Calu3 (cell line): ENCODE measurements at regions of chrX and their contacts with region 1.

Region 1: DNA sequence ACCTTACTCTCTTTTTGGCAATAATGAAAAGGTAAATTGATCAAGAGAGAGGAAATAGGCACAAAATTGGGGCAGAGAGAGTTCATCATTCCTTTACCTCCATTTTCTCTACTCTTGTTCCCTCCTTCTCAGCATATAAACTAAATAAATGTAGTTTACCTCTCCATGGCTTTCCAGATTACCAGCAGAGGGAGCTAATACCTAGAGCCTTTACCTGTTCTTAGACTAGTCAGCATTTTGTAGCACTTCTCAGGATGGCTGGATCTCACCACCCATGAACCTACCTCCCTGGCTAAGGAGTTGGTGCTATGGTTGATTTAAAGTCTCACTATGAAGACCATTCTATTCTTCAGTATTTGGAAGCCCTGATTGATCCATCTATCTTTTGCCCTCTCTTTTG is 15.7 kb downstream of the OFD1 start:
- DNase-seq: peak; percentile 19
- H3K4me3 Mint-ChIP-seq: no peak overlapping the region
- H3K27ac Mint-ChIP-seq: no peak overlapping the region
- H3K4me1 Mint-ChIP-seq: peaks cover 14% of the 10 kb centered on the region
- H3K27me3 Mint-ChIP-seq: no peaks in the 10 kb centered on the region
- CTCF ChIP-seq: no peak

Region 2: DNA sequence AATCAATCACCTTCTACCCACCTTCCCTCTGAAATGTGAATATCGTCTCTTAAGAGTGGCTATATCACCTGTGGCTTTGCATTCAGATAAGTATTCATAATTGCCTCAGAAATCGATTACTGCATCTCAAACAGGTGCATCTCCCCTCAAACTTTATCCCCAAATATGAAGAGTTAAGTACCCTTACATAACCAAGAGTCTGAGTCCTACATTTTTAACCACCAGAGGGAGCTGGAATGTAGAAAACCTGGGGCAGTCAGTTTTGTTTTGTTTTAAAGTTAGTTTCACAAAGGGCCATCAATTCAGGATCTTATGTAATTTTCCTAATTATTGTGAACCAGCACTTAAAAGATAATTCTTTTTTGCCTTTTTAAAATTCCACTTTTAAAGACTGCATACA is 91.6 kb before region 1 on chrX:
- CTCF ChIA-PET with region 1: no interaction called
- intact Hi-C with region 1: loop called (anchors 1 kb)
- DNase-seq: peak; percentile 23
- H3K4me3 Mint-ChIP-seq: no peak overlapping the region
- H3K27ac Mint-ChIP-seq: peak overlapping the region; percentile 17
- H3K4me1 Mint-ChIP-seq: peaks cover 11% of the 10 kb centered on the region
- H3K27me3 Mint-ChIP-seq: no peaks in the 10 kb centered on the region
- CTCF ChIP-seq: peak; percentile 44

Region 3: GRCh38 chrX:13938051-13938828 is 188.0 kb after region 1 on chrX:
- CTCF ChIA-PET with region 1: no interaction called
- intact Hi-C with region 1: loop called (anchors 10 kb)
- DNase-seq: peak; percentile 72
- H3K4me3 Mint-ChIP-seq: peak overlapping the region; percentile 80
- H3K27ac Mint-ChIP-seq: no peak overlapping the region
- H3K4me1 Mint-ChIP-seq: no peaks in the 10 kb centered on the region
- H3K27me3 Mint-ChIP-seq: peaks cover under 1% of the 10 kb centered on the region
- CTCF ChIP-seq: no peak